Activated naive CD4-positive, alpha-beta T cell treated with anti-CD3 and anti-CD28 coated beads for 36 hours (primary cell): ENCODE measurements at regions of chr10 and their contacts with region 1.

Region 1: GRCh38 chr10:22340362-22341189 is 4.7 kb upstream of the SPAG6 start:
- DNase-seq: peak; percentile 63
- H3K4me3 Mint-ChIP-seq: peak overlapping the region; percentile 88
- H3K27ac Mint-ChIP-seq: peak overlapping the region; percentile 74
- H3K4me1 Mint-ChIP-seq: peaks cover 19% of the 10 kb centered on the region
- H3K27me3 Mint-ChIP-seq: peaks cover 69% of the 10 kb centered on the region

Region 2: GRCh38 chr10:22228943-22229801 is 111.4 kb before region 1 on chr10:
- CTCF ChIA-PET with region 1: no interaction called
- intact Hi-C with region 1: loop called (anchors 1 kb)
- DNase-seq: peak; percentile 89
- H3K4me3 Mint-ChIP-seq: peak overlapping the region; percentile 82
- H3K27ac Mint-ChIP-seq: peak overlapping the region; percentile 96
- H3K4me1 Mint-ChIP-seq: peaks cover 17% of the 10 kb centered on the region
- H3K27me3 Mint-ChIP-seq: peaks cover 5% of the 10 kb centered on the region

Region 3: GRCh38 chr10:22321924-22322640 is 18.5 kb before region 1 on chr10:
- CTCF ChIA-PET with region 1: interaction called, 3 read pairs
- intact Hi-C with region 1: loop called (anchors 1 kb)
- DNase-seq: peak; percentile 14
- H3K4me3 Mint-ChIP-seq: peak overlapping the region; percentile 85
- H3K27ac Mint-ChIP-seq: peak overlapping the region; percentile 82
- H3K4me1 Mint-ChIP-seq: peaks cover 40% of the 10 kb centered on the region
- H3K27me3 Mint-ChIP-seq: peaks cover 51% of the 10 kb centered on the region

Region 4: GRCh38 chr10:22436884-22437619 is 96.5 kb after region 1 on chr10:
- CTCF ChIA-PET with region 1: no interaction called
- intact Hi-C with region 1: loop called (anchors 2 kb)
- DNase-seq: peak; percentile 84
- H3K4me3 Mint-ChIP-seq: peak overlapping the region; percentile 84
- H3K27ac Mint-ChIP-seq: peak overlapping the region; percentile 92
- H3K4me1 Mint-ChIP-seq: peaks cover 31% of the 10 kb centered on the region
- H3K27me3 Mint-ChIP-seq: no peaks in the 10 kb centered on the region

Region 5: GRCh38 chr10:22550732-22551131 is 210.2 kb after region 1 on chr10:
- CTCF ChIA-PET with region 1: no interaction called
- intact Hi-C with region 1: no loop called
- DNase-seq: peak; percentile 77
- H3K4me3 Mint-ChIP-seq: no peak overlapping the region
- H3K27ac Mint-ChIP-seq: no peak overlapping the region
- H3K4me1 Mint-ChIP-seq: peaks cover 3% of the 10 kb centered on the region
- H3K27me3 Mint-ChIP-seq: no peaks in the 10 kb centered on the region

Region 6: GRCh38 chr10:22714479-22715289 is 374.1 kb after region 1 on chr10 and contains the start of gene PIP4K2A:
- CTCF ChIA-PET with region 1: no interaction called
- intact Hi-C with region 1: loop called (anchors 5 kb)
- DNase-seq: peak; percentile 74
- H3K4me3 Mint-ChIP-seq: peak within 1 kb of the TSS; percentile 88
- H3K27ac Mint-ChIP-seq: peak within 1 kb of the TSS; percentile 79
- H3K4me1 Mint-ChIP-seq: peaks cover 27% of the 10 kb centered on the region
- H3K27me3 Mint-ChIP-seq: no peaks in the 10 kb centered on the region
- total RNA-seq, gene PIP4K2A: 68.0 to 74.1 TPM